Activated B cell treated with CpG ODN at 0.5 μM for 24 hours (primary cell): ENCODE measurements at regions of chr4 and their contacts with region 1.

Region 1: DNA sequence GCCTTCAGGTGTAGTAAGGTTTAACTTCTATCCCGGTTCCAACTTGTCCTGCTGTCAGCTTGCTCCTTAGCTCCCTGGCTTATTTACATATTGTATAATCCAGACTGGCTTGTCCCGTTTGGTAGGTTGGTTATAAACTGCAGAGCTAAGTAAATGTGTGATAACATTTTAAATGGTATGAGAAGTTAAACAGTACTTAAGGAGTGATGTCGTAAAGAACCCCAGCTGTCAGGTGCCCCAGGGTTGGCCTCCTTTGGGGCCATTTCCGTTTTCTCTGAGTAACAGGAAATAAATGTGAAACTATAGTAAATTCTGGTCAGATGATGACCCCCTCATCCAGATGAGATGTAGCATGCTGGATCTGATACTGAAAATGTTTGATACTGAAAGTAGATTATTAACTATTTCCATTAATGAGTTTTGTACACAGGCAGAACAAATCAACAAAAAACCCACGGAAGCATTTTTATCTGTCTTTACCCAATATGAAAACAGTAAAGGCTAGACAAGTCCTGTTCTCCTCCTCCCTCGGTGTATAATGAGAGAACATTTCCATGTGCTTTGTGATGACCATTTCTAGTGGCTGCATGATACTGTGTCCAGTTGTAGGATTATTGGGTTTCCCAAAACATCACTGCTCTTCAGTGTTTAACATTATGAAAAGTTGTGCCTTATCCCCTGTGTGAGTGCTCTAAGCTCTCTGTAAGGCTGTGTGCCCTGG is 22.4 kb downstream of the GAB1 start:
- DNase-seq: no peak
- ATAC-seq: peak; percentile 88
- H3K4me3 Mint-ChIP-seq: peak overlapping the region; percentile 65
- H3K27ac Mint-ChIP-seq: peak overlapping the region; percentile 83
- H3K4me1 Mint-ChIP-seq: peaks cover 66% of the 10 kb centered on the region
- H3K27me3 Mint-ChIP-seq: no peaks in the 10 kb centered on the region
- CTCF ChIP-seq: no peak

Region 2: DNA sequence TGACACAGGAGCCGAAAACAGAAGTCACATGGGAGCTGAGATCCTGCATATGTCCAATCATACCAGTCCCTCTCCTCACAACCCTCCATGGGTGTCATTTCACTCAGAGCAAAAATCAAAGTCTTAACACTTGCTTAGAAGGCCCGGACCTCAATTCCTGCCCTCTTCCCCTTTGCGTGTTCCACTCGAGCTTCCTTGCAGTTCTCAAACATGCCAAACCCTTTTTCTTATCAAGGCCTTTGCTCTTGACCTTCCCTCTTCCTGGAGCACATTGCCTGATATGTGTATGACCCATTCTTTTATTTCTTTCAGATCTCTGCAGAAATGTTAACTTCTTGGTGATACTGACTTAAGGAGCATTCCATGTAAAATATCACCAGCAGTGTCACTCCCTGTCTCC is 261.3 kb before region 1 on chr4:
- CTCF ChIA-PET with region 1: no interaction called
- POLR2A ChIA-PET with region 1: no interaction called
- intact Hi-C with region 1: no loop called
- DNase-seq: no peak
- ATAC-seq: no peak
- H3K4me3 Mint-ChIP-seq: no peak overlapping the region
- H3K27ac Mint-ChIP-seq: no peak overlapping the region
- H3K4me1 Mint-ChIP-seq: no peaks in the 10 kb centered on the region
- H3K27me3 Mint-ChIP-seq: no peaks in the 10 kb centered on the region
- CTCF ChIP-seq: no peak

Region 3: DNA sequence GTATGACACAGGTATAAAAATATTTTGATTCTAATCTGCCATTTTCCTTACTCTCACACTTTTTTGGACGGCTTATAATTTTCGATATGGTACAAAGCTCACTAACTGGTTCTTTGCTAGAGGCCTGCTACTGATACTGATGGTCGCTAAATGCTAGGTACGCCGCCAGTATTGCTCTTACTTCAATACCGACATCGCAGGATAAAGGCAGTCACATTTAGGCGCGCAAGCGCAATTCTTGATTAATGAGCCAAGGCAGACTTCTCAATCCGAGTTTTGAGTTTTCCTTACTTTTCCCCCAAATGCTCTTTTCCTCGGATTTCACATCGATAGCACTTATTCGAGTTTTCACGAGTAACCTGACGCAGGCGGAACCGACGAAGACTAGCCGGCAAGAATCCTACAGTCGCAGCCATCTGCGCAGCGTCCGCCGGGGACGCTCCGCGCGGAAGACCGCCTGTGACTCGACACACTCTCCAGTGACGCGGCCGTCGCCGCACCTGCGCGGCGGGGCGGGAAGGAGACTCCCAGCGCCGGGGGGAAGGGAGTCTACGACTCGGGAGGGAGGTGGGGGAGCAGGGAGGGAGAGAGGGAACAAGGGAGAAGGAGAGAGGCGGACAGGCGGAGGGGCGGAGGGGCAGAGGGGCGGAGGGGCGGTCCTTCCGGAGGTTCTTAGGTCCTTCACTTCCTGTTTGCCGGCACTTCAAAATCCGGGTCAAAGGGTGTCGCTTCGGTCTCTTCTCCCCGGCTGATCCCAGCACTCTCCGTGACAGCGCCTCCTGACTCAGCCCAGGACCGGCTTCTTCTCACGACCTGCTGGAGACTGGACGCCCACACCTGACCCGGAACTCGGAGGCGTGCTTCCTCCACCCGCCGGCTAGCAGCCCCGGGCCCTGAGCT is 174.6 kb before region 1 on chr4 and contains the start of gene USP38:
- CTCF ChIA-PET with region 1: no interaction called
- POLR2A ChIA-PET with region 1: no interaction called
- intact Hi-C with region 1: no loop called
- DNase-seq: peak; percentile 73
- ATAC-seq: peak; percentile 87
- H3K4me3 Mint-ChIP-seq: peak within 1 kb of the TSS; percentile 93
- H3K27ac Mint-ChIP-seq: peak within 1 kb of the TSS; percentile 94
- H3K4me1 Mint-ChIP-seq: peaks cover 56% of the 10 kb centered on the region
- H3K27me3 Mint-ChIP-seq: no peaks in the 10 kb centered on the region
- CTCF ChIP-seq: no peak
- total RNA-seq, gene USP38: 20.9 and 24.9 TPM in 2 replicates

Region 4: GRCh38 chr4:143375313-143376073 is 16.4 kb after region 1 on chr4:
- CTCF ChIA-PET with region 1: interaction called, 12 read pairs
- POLR2A ChIA-PET with region 1: interaction called, 19 read pairs
- intact Hi-C with region 1: loop called (anchors 1 kb)
- DNase-seq: no peak
- ATAC-seq: peak; percentile 61
- H3K4me3 Mint-ChIP-seq: no peak overlapping the region
- H3K27ac Mint-ChIP-seq: peak overlapping the region; percentile 86
- H3K4me1 Mint-ChIP-seq: peaks cover 68% of the 10 kb centered on the region
- H3K27me3 Mint-ChIP-seq: no peaks in the 10 kb centered on the region
- CTCF ChIP-seq: no peak